Gastrocnemius medialis (tissue), 4 donors: ENCODE measurements at regions of chr17 and their contacts with region 1.

Region 1: GRCh38 chr17:82668631-82669099 is 20.4 kb upstream of the WDR45B start:
- DNase-seq: peak in 1 of 2 donors; percentile 45
- ATAC-seq: peak; percentile 65 to 71
- H3K4me3 ChIP-seq: no peak overlapping the region
- H3K27ac ChIP-seq: peak overlapping the region in 2 of 4 donors; percentile 45 to 55
- H3K4me1 ChIP-seq: peaks cover 5 to 8% of the 10 kb centered on the region in 2 donors
- H3K27me3 ChIP-seq: no peaks in the 10 kb centered on the region
- CTCF ChIP-seq: peak; percentile 34 to 69 (median 52)
- POLR2A ChIP-seq: no peak

Region 2: DNA sequence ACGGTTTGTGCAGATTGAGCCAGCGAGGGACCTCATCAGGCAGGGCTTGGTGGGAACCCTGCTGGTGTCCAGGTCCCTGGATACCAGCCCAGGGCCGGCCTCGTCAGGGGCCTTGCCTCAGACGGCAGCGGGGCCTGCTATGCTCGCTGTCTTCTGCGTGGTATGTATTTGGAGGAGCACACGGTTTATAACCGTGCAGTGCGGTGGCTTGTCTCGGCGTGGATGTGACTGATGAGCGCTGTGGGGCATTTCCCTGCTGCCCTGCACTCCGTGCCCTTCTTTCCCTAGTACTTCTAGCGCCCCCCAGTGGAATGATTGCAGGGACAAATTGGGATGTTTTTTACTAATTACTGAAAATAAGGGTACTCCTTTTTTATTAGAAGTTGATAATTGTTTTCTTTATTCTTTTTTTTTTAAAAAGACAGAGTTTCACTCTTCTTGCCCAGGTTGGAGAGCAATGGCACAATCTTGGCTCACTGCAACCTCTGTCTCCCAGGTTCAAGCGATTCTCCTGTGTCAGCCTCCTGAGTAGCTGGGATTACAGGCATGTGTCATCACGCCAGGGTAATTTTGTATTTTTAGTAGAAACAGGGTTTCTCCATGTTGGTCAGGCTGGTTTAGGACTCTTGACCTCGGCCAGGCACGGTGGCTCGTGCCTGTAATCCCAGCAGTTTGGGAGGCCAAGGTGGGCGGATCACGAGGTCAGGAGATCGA is 98.5 kb after region 1 on chr17:
- in situ Hi-C with region 1: loop called in 2 of 4 experiments (anchors 25 kb)
- intact Hi-C with region 1: loop called (anchors 2 kb)
- DNase-seq: no peak
- ATAC-seq: no peak
- H3K4me3 ChIP-seq: no peak overlapping the region
- H3K27ac ChIP-seq: no peak overlapping the region
- H3K4me1 ChIP-seq: no peaks in the 10 kb centered on the region
- H3K27me3 ChIP-seq: no peaks in the 10 kb centered on the region
- CTCF ChIP-seq: peak in 4 of 5 experiments; percentile 14 to 44 (median 28)
- POLR2A ChIP-seq: no peak

Region 3: DNA sequence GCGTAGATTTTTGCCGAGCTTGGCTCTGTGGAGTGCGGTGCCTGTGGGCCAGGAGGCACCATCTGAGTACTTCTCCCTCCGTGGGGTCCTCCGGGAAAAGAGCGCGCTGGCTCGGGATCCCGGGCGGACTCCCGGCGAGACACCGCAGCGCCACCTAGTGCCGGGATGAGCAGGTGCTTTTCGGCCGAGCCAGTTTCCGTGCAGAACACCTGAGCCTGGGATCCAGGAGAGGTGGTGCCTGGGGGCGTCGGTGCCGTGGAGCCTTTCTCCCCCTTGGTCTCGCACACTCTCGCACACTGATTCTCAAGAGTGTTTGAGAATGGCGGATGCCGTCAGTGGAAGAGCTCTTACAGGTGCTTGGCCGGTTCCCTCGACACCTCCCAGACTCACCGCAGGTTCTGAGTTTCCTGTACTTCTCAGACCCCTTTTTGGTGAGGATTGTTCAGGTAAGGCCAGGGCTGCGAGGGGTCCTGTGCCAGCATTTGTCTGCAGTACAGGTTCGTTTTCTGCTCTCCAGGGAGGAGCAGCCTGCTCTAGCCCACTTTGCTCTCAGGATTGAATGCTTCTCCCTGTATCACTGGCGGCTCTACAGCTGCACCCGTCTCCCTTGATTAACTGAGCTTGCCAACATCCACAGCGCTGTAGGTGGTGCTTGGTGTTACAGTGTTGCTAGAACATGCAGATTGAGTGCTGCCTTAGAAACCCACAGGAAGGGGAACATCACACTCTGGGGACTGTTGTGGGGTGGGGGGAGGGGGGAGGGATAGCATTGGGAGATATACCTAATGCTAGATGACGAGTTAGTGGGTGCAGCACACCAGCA is 106.5 kb after region 1 on chr17:
- in situ Hi-C with region 1: loop called in 2 of 4 experiments (anchors 25 kb)
- intact Hi-C with region 1: loop called (anchors 1 kb)
- DNase-seq: peak; percentile 24 to 50
- ATAC-seq: peak; percentile 50 to 75
- H3K4me3 ChIP-seq: peak overlapping the region in 3 of 4 donors; percentile 21 to 46 (median 30)
- H3K27ac ChIP-seq: no peak overlapping the region
- H3K4me1 ChIP-seq: no peaks in the 10 kb centered on the region
- H3K27me3 ChIP-seq: no peaks in the 10 kb centered on the region
- CTCF ChIP-seq: peak; percentile 53 to 91 (median 87)
- POLR2A ChIP-seq: no peak

Region 4: GRCh38 chr17:82787081-82787848 is 118.6 kb after region 1 on chr17:
- in situ Hi-C with region 1: no loop called
- intact Hi-C with region 1: no loop called
- DNase-seq: peak; percentile 92 to 97
- ATAC-seq: peak; percentile 89 to 90
- H3K4me3 ChIP-seq: no peak overlapping the region
- H3K27ac ChIP-seq: peak overlapping the region; percentile 82 to 90 (median 85)
- H3K4me1 ChIP-seq: peaks cover 28 to 32% of the 10 kb centered on the region in 2 donors
- H3K27me3 ChIP-seq: no peaks in the 10 kb centered on the region
- CTCF ChIP-seq: no peak
- POLR2A ChIP-seq: peak; percentile 71